Activated CD4-positive, alpha-beta T cell treated with anti-CD3 and anti-CD28 coated beads for 36 hours (primary cell): ENCODE measurements at regions of chr7 and their contacts with region 1.

Region 1: DNA sequence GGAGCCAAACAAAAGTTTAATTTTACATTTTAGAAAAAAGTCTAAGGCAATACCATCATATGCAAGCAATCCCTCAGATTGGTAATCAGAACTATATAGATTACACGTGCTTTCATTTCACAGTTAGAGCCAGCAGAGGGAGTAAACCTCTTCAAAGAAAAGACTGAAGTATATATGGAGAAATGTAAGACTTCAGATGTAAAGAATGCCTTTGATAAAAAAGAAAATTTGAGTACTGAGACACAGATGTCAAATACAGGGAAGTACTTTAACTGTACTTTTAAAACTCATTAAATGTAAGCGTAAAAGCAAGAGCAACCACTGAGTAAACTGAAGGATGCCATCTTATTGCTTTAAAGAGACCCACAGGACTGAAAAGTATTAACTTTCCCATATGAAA is 101.4 kb upstream of the FAM133B start:
- DNase-seq: no peak
- ATAC-seq: peak; percentile 88
- H3K4me3 Mint-ChIP-seq: no peak overlapping the region
- H3K27ac Mint-ChIP-seq: peak overlapping the region; percentile 73
- H3K4me1 Mint-ChIP-seq: peaks cover 47% of the 10 kb centered on the region
- H3K27me3 Mint-ChIP-seq: no peaks in the 10 kb centered on the region

Region 2: DNA sequence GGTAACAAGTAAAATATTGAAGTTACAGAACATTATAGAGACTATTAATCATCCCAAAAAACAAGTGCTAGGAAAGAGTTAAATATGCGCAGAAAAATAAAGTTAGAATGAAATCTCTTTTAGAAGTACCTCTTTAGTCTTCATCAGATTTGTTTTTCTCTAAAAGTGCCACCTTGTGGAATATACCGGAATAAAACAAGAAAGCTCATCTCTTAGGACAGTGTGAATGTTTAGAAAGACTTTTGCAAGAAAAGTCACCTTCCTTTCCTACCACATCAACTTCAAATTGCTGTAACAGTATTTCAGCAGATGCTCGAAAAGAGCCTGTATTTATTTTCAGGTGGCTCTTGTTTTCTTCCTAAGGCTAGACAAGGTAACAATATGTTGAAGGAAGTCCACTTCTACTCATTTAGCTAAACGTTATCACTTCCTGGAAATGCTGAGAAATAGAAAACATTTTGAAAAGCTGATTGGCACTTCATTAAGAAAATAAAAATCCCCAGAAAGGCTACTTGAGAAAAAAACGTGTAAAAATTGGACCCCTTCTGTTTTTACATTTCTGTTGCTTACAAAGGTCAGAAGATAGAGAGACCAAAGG is 81.6 kb before region 1 on chr7:
- CTCF ChIA-PET with region 1: no interaction called
- POLR2A ChIA-PET with region 1: no interaction called
- intact Hi-C with region 1: no loop called
- DNase-seq: no peak
- ATAC-seq: peak; percentile 51
- H3K4me3 Mint-ChIP-seq: no peak overlapping the region
- H3K27ac Mint-ChIP-seq: peak overlapping the region; percentile 17
- H3K4me1 Mint-ChIP-seq: peaks cover 29% of the 10 kb centered on the region
- H3K27me3 Mint-ChIP-seq: no peaks in the 10 kb centered on the region

Region 3: DNA sequence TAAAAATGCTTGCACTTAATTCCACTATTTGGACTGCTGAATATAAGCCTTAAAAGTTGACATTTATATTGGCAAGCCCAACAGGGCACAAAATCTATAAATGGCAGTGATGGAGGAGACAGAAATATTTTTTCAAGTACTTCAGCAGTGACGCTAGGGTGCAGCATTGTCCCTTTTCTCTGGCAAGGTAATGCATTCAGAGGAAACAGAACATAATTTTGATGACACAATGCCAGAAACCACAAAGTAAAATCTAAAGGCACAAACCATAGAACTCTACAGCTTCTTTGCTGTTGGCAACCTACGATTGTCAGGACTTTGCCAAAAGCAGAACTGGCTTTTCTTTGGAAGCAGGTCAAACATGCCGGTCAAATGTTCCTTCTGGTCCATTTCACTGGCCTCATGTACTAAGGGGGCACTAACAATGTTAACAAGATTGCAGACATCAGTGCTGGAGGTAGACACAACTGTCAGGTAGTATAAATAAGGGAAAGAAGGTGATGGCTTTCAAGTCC is 70.5 kb before region 1 on chr7:
- CTCF ChIA-PET with region 1: interaction called, 4 read pairs
- POLR2A ChIA-PET with region 1: no interaction called
- intact Hi-C with region 1: loop called in 1 of 2 experiments (anchors 1 kb)
- DNase-seq: peak; percentile 90
- ATAC-seq: peak; percentile 78
- H3K4me3 Mint-ChIP-seq: peak overlapping the region; percentile 0
- H3K27ac Mint-ChIP-seq: peak overlapping the region; percentile 90
- H3K4me1 Mint-ChIP-seq: peaks cover 50% of the 10 kb centered on the region
- H3K27me3 Mint-ChIP-seq: no peaks in the 10 kb centered on the region

Region 4: DNA sequence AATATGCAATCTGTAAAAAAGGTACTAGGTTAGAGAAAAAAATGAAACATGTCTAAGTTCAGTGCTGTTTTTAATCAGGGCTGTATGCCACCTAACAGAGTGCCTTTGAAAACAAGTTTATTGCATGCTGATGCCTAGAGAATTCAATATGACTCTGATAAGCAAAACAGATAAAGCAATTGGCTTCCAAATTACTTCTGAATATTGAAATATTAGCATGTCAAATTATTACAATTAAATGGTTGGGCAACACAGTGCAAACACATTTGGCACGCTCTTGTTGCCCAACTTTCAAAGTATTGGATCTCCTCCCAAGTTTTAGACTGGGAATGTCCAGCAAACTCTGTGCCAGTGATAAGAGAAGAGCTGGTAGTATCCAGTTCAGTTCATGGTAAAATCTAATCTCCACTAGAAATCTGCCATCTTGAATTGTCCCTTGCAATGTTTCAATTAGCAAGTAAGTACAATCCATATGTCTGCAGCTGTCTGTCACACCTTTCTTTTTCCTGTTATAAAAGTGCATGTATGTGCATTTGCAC is 36.2 kb before region 1 on chr7:
- CTCF ChIA-PET with region 1: interaction called, 10 read pairs
- POLR2A ChIA-PET with region 1: no interaction called
- intact Hi-C with region 1: no loop called
- DNase-seq: no peak
- ATAC-seq: no peak
- H3K4me3 Mint-ChIP-seq: no peak overlapping the region
- H3K27ac Mint-ChIP-seq: no peak overlapping the region
- H3K4me1 Mint-ChIP-seq: peaks cover 36% of the 10 kb centered on the region
- H3K27me3 Mint-ChIP-seq: no peaks in the 10 kb centered on the region

Region 5: DNA sequence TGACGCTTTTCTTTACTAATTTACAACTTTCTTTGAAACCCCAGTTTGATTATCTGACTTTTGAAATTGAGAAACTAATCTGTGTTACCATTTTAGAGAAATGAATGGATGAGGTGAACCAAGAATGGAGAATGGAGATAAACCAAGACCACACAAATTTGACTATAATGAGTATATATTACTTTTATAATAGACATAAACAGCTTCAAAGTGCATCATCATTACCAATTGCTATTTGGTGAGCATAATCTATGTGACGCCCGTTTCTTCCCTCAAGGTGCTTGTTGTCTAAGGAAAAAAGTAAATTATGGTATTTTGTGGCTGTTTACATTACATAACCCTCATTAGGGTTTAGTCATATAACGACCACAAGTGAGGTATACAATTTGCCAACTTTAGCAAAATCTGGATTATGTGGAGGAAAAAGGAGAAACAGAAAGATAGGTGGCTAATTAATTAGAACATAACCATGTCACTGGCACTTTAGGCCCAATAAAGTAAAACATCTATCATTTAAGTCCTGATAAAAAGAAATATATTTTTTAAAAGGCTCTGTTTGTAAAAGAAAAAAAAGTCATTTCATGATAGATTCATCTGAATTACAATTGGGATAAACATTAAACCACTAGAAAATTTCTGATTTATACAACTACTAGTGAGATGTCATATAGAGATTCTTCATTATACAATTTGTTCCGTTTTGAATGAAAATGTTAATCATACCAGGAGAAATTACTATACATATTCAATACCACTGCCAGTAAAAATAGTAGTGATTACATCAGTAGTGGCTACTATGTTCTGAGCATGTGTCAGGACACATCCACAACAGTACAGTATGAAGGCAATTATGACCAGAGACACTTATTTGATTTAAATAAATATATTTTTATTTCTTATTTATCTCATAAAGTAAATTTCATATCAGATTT is 16.8 kb after region 1 on chr7:
- CTCF ChIA-PET with region 1: interaction called, 12 read pairs
- POLR2A ChIA-PET with region 1: no interaction called
- intact Hi-C with region 1: loop called in 1 of 2 experiments (anchors 2 kb)
- DNase-seq: no peak
- ATAC-seq: peak; percentile 84
- H3K4me3 Mint-ChIP-seq: no peak overlapping the region
- H3K27ac Mint-ChIP-seq: peak overlapping the region; percentile 86
- H3K4me1 Mint-ChIP-seq: peaks cover 52% of the 10 kb centered on the region
- H3K27me3 Mint-ChIP-seq: no peaks in the 10 kb centered on the region

Region 6: DNA sequence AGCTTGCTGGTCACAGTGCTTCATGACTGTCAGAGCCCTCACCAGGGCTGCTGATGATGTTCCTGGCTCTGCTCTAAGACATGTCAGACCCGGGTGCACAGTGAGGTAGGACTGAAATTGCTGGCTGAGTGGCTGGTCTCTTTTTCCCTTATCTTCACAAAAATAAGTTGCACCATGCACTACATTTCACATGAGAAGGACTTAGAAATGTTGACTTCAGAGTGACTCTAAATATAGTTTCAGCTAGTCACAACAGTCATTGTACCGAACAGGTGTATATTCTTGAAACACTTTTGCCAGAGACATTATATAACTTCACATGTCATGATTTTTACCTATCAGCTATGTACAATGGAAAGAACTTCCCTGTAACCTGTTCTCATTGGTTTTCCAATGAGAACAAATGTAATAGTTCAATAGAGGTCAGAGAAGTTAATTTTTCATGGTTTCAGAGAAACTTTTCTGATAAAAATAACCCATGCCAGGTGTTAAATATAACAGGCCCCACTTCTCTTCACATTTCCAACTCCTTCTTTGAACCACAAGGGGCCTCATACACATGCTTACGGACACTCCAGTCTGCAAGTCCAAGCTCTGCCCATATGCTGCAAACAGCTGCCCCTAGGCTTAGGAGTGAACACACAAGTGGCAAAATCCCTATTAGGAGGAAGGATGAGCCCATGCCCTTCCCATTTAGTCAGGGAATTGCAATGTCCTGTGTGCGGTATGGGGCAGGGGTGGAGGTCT is 29.2 kb after region 1 on chr7:
- CTCF ChIA-PET with region 1: no interaction called
- POLR2A ChIA-PET with region 1: no interaction called
- intact Hi-C with region 1: no loop called
- DNase-seq: no peak
- ATAC-seq: no peak
- H3K4me3 Mint-ChIP-seq: no peak overlapping the region
- H3K27ac Mint-ChIP-seq: peak overlapping the region; percentile 62
- H3K4me1 Mint-ChIP-seq: peaks cover 62% of the 10 kb centered on the region
- H3K27me3 Mint-ChIP-seq: no peaks in the 10 kb centered on the region

Region 7: GRCh38 chr7:92768501-92769393 is 77.2 kb after region 1 on chr7:
- CTCF ChIA-PET with region 1: interaction called, 3 read pairs
- POLR2A ChIA-PET with region 1: no interaction called
- intact Hi-C with region 1: loop called in 1 of 2 experiments (anchors 5 kb)
- DNase-seq: peak; percentile 61
- ATAC-seq: peak; percentile 95
- H3K4me3 Mint-ChIP-seq: peak overlapping the region; percentile 21
- H3K27ac Mint-ChIP-seq: peak overlapping the region; percentile 89
- H3K4me1 Mint-ChIP-seq: peaks cover 67% of the 10 kb centered on the region
- H3K27me3 Mint-ChIP-seq: no peaks in the 10 kb centered on the region

Region 8: DNA sequence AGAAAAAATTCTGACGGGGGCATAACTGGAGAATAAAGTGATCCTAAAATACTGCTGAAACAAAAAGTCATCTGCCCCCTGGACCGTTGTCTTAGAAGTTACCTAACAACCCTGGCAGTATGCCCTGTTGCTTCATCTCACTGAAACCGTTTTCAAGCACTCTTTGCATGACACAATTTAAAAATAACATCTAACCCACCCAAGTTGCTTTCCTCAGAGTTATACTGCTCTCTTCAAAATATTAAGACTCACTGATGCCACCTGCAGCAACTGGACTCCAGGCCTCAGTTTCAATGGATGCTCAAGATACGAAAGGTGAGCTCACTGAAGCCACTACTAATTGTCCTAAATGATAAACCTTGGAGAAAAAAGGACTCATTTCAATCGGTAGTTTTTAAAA is 87.4 kb after region 1 on chr7:
- CTCF ChIA-PET with region 1: no interaction called
- POLR2A ChIA-PET with region 1: no interaction called
- intact Hi-C with region 1: no loop called
- DNase-seq: no peak
- ATAC-seq: no peak
- H3K4me3 Mint-ChIP-seq: no peak overlapping the region
- H3K27ac Mint-ChIP-seq: no peak overlapping the region
- H3K4me1 Mint-ChIP-seq: peaks cover 45% of the 10 kb centered on the region
- H3K27me3 Mint-ChIP-seq: no peaks in the 10 kb centered on the region

Region 9: DNA sequence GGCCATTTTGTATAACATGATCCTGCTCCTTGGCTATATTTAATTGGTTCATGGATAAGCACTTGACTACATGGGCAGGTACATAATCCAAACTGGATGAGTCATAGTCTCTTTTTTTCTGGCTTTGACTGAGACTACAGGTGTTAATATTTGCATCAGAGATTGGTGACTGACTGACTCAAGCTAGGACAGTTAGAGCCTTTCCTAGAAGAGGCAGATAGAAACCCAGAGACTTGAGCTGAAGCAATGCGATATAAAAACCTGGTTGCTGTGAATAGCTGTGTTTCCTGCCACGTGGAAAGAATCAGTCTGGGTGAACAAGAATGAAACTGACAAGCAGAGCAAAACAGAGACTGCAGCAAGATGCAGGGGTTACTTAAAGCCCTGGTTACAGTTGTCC is 345.2 kb after region 1 on chr7:
- CTCF ChIA-PET with region 1: no interaction called
- POLR2A ChIA-PET with region 1: no interaction called
- intact Hi-C with region 1: loop called in 1 of 2 experiments (anchors 1 kb)
- DNase-seq: peak; percentile 67
- ATAC-seq: peak; percentile 97
- H3K4me3 Mint-ChIP-seq: no peak overlapping the region
- H3K27ac Mint-ChIP-seq: peak overlapping the region; percentile 74
- H3K4me1 Mint-ChIP-seq: peaks cover 20% of the 10 kb centered on the region
- H3K27me3 Mint-ChIP-seq: no peaks in the 10 kb centered on the region

Region 10: DNA sequence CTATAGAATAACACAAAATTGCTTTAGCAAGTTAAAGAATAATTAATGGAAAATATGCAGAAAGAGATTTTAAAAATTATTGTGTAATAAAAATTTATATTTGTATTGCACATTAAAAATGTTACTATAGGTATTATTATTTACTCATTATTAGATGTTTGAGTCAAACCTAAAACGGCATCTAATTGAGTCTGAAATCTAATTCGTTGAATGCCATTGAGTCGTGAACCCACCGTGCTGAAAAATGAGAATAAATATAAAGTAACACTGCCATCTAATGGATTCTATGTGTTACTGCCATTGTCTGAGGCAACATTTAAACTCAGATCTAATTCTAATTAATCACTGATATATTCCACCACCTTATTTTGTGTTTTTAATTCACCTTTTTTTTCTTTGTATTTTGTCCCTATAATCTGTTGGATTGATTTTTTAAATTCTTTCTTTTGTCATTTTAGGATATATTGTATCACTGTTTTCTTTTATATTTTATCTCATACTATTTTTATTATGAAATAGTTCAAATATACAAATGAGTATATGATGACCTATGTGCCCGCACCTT is 364.0 kb after region 1 on chr7:
- CTCF ChIA-PET with region 1: interaction called, 3 read pairs
- POLR2A ChIA-PET with region 1: no interaction called
- intact Hi-C with region 1: loop called (anchors 1 to 2 kb)
- DNase-seq: no peak
- ATAC-seq: peak; percentile 74
- H3K4me3 Mint-ChIP-seq: no peak overlapping the region
- H3K27ac Mint-ChIP-seq: no peak overlapping the region
- H3K4me1 Mint-ChIP-seq: peaks cover 9% of the 10 kb centered on the region
- H3K27me3 Mint-ChIP-seq: peaks cover 13% of the 10 kb centered on the region